Endothelial cell of umbilical vein (primary cell): ENCODE measurements at regions of chr9 and their contacts with region 1.

Region 1: GRCh38 chr9:93095205-93096130 is 549 bp upstream of the CARD19 start:
- DNase-seq: peak; percentile 99
- H3K4me3 ChIP-seq: peak overlapping the region in 2 of 3 experiments; percentile 18 to 83
- H3K27ac ChIP-seq: peak overlapping the region; percentile 69
- H3K4me1 ChIP-seq: peaks cover 34% of the 10 kb centered on the region
- H3K27me3 ChIP-seq: no peaks in the 10 kb centered on the region
- CTCF ChIP-seq: no peak
- POLR2A ChIP-seq: peak; percentile 47

Region 2: DNA sequence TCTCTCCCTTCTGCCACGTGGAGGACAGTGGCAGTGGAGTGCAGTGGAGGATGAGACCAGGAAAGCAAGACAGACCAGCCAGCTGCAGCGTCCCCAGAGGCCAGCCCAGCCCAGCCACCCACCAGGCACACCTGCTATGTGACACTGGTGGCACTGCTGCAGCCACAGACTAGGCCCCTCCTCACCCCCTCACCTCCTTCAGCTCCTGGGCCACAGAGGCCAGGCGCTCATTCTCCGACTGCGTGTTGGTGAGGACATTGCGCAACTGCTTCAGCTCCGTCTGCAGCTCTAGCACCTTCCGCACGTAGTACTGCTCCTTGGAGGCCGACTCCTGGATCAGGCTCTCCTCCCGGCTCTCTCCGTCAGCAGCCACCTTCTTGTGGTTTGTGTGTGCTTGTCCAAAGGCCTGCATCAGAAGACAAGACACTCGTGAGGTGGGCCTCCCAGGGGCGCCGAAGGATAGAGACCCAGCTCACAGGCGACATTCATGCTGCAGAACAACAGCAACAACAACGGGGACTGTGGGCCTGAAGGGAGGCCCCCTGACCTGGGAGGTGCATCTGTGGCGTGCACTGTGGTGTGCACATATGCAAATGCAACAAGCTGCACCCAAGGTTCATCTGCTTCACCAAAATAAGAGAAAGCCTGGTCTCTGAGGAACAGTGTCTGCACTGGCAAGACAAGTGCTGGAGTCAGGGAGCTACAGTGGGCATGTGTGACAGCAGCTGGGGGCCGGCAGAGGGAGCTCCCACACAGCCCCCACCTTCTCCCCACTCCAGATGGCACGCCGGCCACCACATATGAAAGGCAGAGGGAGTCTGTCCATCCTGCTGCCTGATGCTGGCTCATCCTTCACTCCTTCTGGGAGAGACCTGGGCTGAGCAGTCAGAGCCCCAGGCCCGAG is 366.4 kb before region 1 on chr9:
- CTCF ChIA-PET with region 1: no interaction called
- POLR2A ChIA-PET with region 1: no interaction called
- dilution Hi-C with region 1: no loop called
- intact Hi-C with region 1: no loop called
- DNase-seq: no peak
- H3K4me3 ChIP-seq: no peak overlapping the region
- H3K27ac ChIP-seq: no peak overlapping the region
- H3K4me1 ChIP-seq: peaks cover 11% of the 10 kb centered on the region
- H3K27me3 ChIP-seq: no peaks in the 10 kb centered on the region
- CTCF ChIP-seq: peak; percentile 14 to 44
- POLR2A ChIP-seq: no peak

Region 3: DNA sequence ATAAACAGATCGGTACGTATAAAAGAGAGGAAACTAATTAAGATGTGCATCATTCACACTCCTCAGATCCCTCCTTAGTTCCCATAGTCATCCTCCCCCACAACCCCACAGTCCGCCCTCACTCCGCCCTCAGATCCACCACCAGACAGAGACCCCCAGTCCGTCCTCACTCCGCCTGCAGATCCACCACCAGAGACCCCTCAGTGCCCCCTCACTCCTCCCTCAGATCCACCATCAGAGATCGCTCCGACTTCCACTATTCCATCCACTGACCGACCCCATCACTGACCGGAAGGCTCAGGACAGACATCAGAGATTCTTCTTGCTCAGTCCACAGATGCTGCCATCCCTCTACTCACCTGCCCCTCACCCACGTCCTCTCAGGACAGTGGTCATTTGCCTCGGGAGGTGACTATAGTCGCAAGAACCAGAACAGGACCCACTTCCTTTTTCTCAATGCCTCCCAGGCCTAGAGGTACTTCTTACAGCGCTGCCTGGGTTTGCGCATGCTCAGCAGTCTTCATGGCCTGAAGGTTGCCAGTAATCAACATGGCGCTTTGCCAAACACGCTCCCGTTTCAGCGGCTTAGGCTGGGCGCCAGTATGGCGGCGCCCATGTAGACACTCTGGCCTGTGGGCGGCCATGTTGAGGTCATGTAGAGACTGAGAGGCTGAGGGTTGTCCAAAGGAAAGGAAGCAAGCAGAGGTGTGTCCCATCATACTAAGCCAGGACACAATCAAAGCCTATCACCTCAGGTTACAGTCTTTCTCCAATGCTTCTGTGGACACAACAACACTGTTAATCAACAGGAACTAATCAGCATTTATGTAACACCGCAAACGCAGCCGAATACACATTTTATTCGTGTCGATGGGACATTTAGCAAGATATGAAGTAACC is 217.7 kb before region 1 on chr9 and contains the start of gene ZNF484:
- CTCF ChIA-PET with region 1: no interaction called
- POLR2A ChIA-PET with region 1: no interaction called
- dilution Hi-C with region 1: no loop called
- intact Hi-C with region 1: loop called (anchors 1 kb)
- DNase-seq: peak; percentile 97
- H3K4me3 ChIP-seq: peak within 1 kb of the TSS; percentile 53 to 98 (median 93)
- H3K27ac ChIP-seq: peak within 1 kb of the TSS; percentile 86
- H3K4me1 ChIP-seq: peaks cover 5% of the 10 kb centered on the region
- H3K27me3 ChIP-seq: no peaks in the 10 kb centered on the region
- CTCF ChIP-seq: no peak
- POLR2A ChIP-seq: peak; percentile 62
- total RNA-seq, gene ZNF484: 6.7 and 7.2 TPM in 2 replicates

Region 4: GRCh38 chr9:93058355-93059096 is 36.9 kb before region 1 on chr9 and contains the start of gene SUSD3:
- CTCF ChIA-PET with region 1: no interaction called
- POLR2A ChIA-PET with region 1: no interaction called
- dilution Hi-C with region 1: no loop called
- intact Hi-C with region 1: loop called (anchors 5 kb)
- DNase-seq: peak; percentile 32
- H3K4me3 ChIP-seq: no peak within 1 kb of the TSS
- H3K27ac ChIP-seq: no peak within 1 kb of the TSS
- H3K4me1 ChIP-seq: no peaks in the 10 kb centered on the region
- H3K27me3 ChIP-seq: peaks cover 0 to 2% of the 10 kb centered on the region in 2 experiments
- CTCF ChIP-seq: no peak
- POLR2A ChIP-seq: no peak
- total RNA-seq, gene SUSD3: not detected in 2 replicates

Region 5: DNA sequence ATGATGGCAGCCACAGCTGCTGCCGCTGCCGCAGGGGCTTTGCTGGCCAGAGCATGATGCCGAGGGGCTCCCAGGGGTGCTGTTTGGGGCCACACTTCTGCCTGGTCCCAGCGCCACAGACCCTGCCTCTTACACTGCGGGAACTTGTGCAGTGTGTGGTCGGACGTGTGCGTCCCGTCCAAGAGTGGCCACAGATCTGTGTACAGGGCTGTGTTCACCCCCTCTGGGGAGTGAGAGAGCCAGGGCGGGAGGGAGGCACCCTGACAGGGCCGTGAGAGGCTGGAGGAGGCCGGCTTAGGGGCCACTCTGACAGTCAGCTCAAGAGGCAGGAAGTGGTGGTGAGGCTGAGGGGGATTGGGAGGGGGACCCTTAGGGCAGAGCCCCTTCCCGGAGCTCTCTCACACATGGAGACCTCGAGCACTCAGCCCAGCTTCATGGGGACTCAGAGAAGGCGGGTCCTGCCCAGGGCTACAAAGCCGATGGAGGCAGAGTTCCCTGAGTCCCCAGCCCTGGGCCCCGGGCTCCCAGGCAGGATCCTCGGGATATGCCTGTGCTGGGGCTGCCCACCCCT is 12.5 kb before region 1 on chr9:
- CTCF ChIA-PET with region 1: no interaction called
- POLR2A ChIA-PET with region 1: no interaction called
- dilution Hi-C with region 1: no loop called
- intact Hi-C with region 1: no loop called
- DNase-seq: no peak
- H3K4me3 ChIP-seq: no peak overlapping the region
- H3K27ac ChIP-seq: no peak overlapping the region
- H3K4me1 ChIP-seq: no peaks in the 10 kb centered on the region
- H3K27me3 ChIP-seq: no peaks in the 10 kb centered on the region
- CTCF ChIP-seq: no peak
- POLR2A ChIP-seq: no peak

Region 6: GRCh38 chr9:93119953-93120845 is 24.7 kb after region 1 on chr9:
- CTCF ChIA-PET with region 1: interaction called, 11 read pairs
- POLR2A ChIA-PET with region 1: no interaction called
- dilution Hi-C with region 1: no loop called
- intact Hi-C with region 1: loop called (anchors 1 kb)
- DNase-seq: peak; percentile 80
- H3K4me3 ChIP-seq: no peak overlapping the region
- H3K27ac ChIP-seq: no peak overlapping the region
- H3K4me1 ChIP-seq: peaks cover 10% of the 10 kb centered on the region
- H3K27me3 ChIP-seq: no peaks in the 10 kb centered on the region
- CTCF ChIP-seq: peak in 1 of 2 donors; percentile 41
- POLR2A ChIP-seq: peak; percentile 30

Region 7: DNA sequence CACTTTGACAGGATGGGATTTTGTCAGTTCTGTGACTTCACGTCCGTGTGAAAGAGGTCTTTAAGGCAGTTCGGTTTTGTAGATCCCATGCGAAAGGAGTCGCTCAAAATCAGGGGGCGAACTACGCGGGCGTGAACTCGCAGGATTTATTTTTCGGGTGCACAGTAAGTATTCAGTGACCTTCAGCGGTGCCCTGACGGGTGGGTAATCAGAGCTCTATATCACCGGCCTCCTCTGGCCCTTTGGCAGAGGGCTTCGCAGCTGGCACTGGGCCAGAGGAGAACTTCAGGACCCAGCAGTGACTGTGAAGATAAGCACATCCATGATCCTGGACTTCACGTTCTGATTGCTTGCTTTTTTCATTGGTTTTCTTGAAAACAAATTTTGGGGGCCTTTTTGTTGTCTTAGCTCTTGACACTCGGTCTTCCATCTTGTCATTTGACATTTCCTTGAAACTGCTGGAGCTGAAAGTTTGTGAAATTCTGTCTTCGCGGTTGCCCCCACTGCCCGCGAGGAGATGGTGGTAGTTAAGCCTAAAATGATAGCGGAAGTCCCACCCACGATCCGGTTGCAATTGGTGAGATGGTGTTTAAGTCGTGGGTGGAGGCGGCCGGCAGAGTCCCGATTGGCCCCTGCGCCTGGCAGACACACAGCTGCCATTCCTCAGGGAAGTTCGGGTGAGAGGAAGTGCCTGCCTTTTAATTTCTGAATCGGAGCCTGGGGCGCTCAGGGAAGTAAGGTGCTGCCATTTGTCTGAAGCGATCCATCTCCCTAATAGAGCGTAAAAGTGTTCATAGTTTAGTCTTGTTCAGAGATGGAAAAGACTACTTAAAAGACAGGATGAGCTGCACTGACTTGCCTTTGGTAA is 357.8 kb after region 1 on chr9 and contains the start of gene FAM120AOS:
- CTCF ChIA-PET with region 1: no interaction called
- POLR2A ChIA-PET with region 1: interaction called, 4 read pairs
- dilution Hi-C with region 1: no loop called
- intact Hi-C with region 1: loop called (anchors 1 kb)
- DNase-seq: peak; percentile 94
- H3K4me3 ChIP-seq: peak within 1 kb of the TSS; percentile 85 to 99 (median 88)
- H3K27ac ChIP-seq: peak within 1 kb of the TSS; percentile 58
- H3K4me1 ChIP-seq: peaks cover 11% of the 10 kb centered on the region
- H3K27me3 ChIP-seq: no peaks in the 10 kb centered on the region
- CTCF ChIP-seq: no peak
- POLR2A ChIP-seq: no peak
- total RNA-seq, gene FAM120AOS: 28.8 and 32.4 TPM in 2 replicates

Region 8: DNA sequence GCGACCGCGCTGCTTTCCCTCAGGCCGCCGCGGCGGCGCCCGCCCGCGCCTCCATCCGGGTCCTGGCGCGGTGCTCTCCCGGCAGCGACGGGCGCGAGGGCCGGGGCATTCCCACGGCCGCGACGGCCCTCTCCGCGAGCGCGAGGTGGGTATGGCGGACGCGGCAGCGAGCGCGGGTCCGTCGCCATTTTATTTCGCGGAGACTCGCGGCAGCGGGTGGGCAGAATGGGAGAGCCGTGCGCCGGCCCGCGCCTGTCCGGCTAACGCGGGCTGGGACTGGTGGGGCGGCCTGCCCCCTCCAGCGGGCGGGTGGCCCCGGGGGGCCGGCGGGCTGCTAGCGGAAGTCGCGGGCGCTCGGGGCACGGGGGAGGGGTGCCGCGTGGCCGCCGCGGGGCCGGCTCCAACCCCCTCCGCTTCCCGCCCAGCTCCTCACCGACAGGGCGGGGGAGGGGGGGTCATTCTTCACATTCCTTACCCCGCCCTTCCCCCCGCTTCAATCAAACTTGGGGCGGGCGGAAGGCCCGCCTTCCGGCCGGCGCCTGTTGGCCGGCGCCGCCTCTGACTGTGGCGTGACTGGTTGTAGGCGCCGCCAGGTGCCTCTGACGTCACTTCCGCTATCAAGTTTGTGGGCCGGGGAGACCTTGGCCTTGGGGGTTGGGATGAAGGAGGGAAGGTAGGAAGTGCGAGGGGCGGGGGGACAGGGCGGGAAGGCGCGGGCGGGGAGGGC is 1070.9 kb after region 1 on chr9:
- CTCF ChIA-PET with region 1: no interaction called
- POLR2A ChIA-PET with region 1: no interaction called
- dilution Hi-C with region 1: no loop called
- intact Hi-C with region 1: loop called (anchors 10 kb)
- DNase-seq: peak; percentile 98
- H3K4me3 ChIP-seq: peak overlapping the region; percentile 66 to 83 (median 70)
- H3K27ac ChIP-seq: peak overlapping the region; percentile 100
- H3K4me1 ChIP-seq: peaks cover 29% of the 10 kb centered on the region
- H3K27me3 ChIP-seq: no peaks in the 10 kb centered on the region
- CTCF ChIP-seq: no peak
- POLR2A ChIP-seq: peak; percentile 64